ENCODE measurements at regions of chr2 and their contacts with region 1.

Region 1: GRCh38 chr2:134137182-134137611 is 116.7 kb upstream of the MGAT5 start:
- DNase-seq: peak; percentile 69 to 79
- ATAC-seq: peak; percentile 59
- H3K4me3 ChIP-seq: peak overlapping the region; percentile 1 to 50
- H3K27ac ChIP-seq: peak overlapping the region in 1 of 2 donors; percentile 66
- H3K4me1 ChIP-seq: no peaks in the 10 kb centered on the region
- H3K27me3 ChIP-seq: no peaks in the 10 kb centered on the region

Region 2: GRCh38 chr2:134089454-134089853 is 47.7 kb before region 1 on chr2:
- intact Hi-C with region 1: no loop called
- DNase-seq: no peak
- ATAC-seq: no peak
- H3K4me3 ChIP-seq: no peak overlapping the region
- H3K27ac ChIP-seq: no peak overlapping the region
- H3K4me1 ChIP-seq: no peaks in the 10 kb centered on the region
- H3K27me3 ChIP-seq: no peaks in the 10 kb centered on the region

Region 3: GRCh38 chr2:134181210-134181609 is 44.0 kb after region 1 on chr2:
- intact Hi-C with region 1: loop called in 1 of 2 experiments (anchors 5 kb)
- DNase-seq: no peak
- ATAC-seq: no peak
- H3K4me3 ChIP-seq: no peak overlapping the region
- H3K27ac ChIP-seq: no peak overlapping the region
- H3K4me1 ChIP-seq: no peaks in the 10 kb centered on the region
- H3K27me3 ChIP-seq: no peaks in the 10 kb centered on the region

Region 4: DNA sequence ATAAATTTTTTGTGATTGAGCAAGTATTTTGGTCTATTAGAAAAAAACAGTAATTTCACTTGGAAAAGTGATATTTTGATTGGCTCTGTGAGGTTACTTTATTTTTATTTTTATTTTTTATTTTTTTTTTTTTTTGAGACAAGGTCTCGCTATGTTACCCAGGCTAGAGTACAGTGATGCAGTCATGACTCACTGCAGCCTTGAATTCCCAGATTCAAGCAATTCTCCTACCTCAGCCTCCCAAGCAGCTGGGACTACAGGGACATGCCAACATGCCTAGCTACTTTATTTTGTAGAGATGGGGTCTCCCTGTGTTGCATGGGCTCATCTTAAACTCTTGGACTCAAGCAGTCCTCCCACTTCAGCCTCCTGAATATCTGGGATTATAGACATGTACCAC is 55.8 kb after region 1 on chr2:
- intact Hi-C with region 1: loop called in 1 of 2 experiments (anchors 5 kb)
- DNase-seq: no peak
- ATAC-seq: peak; percentile 80
- H3K4me3 ChIP-seq: no peak overlapping the region
- H3K27ac ChIP-seq: no peak overlapping the region
- H3K4me1 ChIP-seq: peaks cover 0 to 7% of the 10 kb centered on the region in 2 donors
- H3K27me3 ChIP-seq: no peaks in the 10 kb centered on the region

Measured in aorta (tissue), 5 donors.